ENCODE measurements at regions of chr5 and their contacts with region 1.

Region 1: GRCh38 chr5:130871346-130872086 is 293.5 kb downstream of the HINT1 start:
- DNase-seq: peak in 1 of 3 donors; percentile 81
- ATAC-seq: peak; percentile 72
- H3K4me3 ChIP-seq: no peak overlapping the region
- H3K4me1 ChIP-seq: no peaks in the 10 kb centered on the region
- CTCF ChIP-seq: peak; percentile 42

Region 2: GRCh38 chr5:130571076-130571475 is 300.4 kb before region 1 on chr5:
- intact Hi-C with region 1: no loop called
- DNase-seq: no peak
- ATAC-seq: no peak
- H3K4me3 ChIP-seq: no peak overlapping the region
- H3K4me1 ChIP-seq: no peaks in the 10 kb centered on the region
- CTCF ChIP-seq: no peak

Region 3: GRCh38 chr5:130937046-130937445 is 65.5 kb after region 1 on chr5:
- intact Hi-C with region 1: no loop called
- DNase-seq: no peak
- ATAC-seq: no peak
- H3K4me3 ChIP-seq: no peak overlapping the region
- H3K4me1 ChIP-seq: no peaks in the 10 kb centered on the region
- CTCF ChIP-seq: no peak

Region 4: GRCh38 chr5:131109540-131110255 is 238.2 kb after region 1 on chr5:
- intact Hi-C with region 1: loop called in 1 of 2 experiments (anchors 10 kb)
- DNase-seq: peak in 1 of 3 donors; percentile 64
- ATAC-seq: peak; percentile 73
- H3K4me3 ChIP-seq: no peak overlapping the region
- H3K4me1 ChIP-seq: peaks cover 2% of the 10 kb centered on the region
- CTCF ChIP-seq: no peak

Measured in mucosa of descending colon (tissue), 3 donors.